Activated naive CD8-positive, alpha-beta T cell treated with anti-CD3 and anti-CD28 coated beads, Interleukin-2, amount 10 ng/mL, durations not matched to agents 7 days and 5 days (primary cell): ENCODE measurements at regions of chr16 and their contacts with region 1.

Region 1: DNA sequence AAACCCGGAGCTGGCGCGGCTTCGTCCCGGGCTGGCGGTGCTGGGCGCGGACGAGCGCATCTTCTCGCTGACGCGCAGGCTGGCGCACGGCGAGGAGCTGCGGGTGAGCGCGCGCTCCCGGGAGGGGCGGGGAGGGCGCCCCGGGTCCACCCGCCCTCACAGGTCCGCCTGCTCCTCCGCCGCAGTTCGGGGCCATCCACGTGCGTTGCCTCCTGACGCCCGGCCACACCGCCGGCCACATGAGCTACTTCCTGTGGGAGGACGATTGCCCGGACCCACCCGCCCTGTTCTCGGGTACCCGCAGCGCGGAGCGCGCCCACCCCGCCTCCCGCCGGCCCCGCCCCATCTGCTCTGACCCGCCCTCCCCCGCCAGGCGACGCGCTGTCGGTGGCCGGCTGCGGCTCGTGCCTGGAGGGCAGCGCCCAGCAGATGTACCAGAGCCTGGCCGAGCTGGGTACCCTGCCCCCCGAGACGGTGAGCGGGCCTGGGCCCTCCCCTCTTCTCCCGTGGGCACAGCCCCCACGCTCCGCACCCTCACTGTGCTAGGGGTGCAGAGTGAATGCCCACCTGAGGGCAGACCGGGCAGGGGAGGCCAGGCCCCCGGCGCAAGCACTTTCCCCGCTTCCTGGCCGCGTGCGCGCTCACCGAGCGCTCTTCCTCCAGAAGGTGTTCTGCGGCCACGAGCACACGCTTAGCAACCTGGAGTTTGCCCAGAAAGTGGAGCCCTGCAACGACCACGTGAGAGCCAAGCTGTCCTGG is 1.4 kb downstream of the HAGHL start:
- DNase-seq: peak; percentile 77
- ATAC-seq: peak; percentile 55
- H3K4me3 Mint-ChIP-seq: peak overlapping the region; percentile 40
- H3K27ac Mint-ChIP-seq: no peak overlapping the region
- H3K4me1 Mint-ChIP-seq: no peaks in the 10 kb centered on the region
- H3K27me3 Mint-ChIP-seq: no peaks in the 10 kb centered on the region

Region 2: DNA sequence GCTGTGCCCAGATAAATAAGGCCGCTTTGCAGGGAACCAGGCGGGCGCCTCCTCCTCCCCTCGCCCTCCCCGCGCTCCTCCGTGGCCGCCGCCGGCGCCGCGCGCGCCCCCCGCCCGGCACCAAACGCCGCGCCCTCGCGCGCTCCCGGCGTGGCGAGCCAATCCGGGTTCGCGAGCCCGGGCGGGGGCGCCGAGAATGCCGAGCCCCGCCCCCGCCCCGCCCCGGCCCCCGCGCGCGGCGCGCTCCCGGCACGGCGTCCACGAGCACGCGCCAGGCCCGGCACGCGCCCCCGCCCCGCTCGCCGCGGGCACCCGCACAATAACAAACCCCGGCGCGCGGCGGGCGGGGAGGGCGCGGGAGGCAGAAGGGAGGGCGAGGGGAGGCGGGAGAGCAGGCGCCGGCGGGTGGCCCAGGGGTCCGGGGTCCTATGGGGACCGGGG is 22.5 kb before region 1 on chr16 and contains the start of gene FBXL16:
- POLR2A ChIA-PET with region 1: no interaction called
- DNase-seq: no peak
- ATAC-seq: no peak
- H3K4me3 Mint-ChIP-seq: no peak within 1 kb of the TSS
- H3K27ac Mint-ChIP-seq: no peak within 1 kb of the TSS
- H3K4me1 Mint-ChIP-seq: no peaks in the 10 kb centered on the region
- H3K27me3 Mint-ChIP-seq: peaks cover 45% of the 10 kb centered on the region
- total RNA-seq, gene FBXL16: 15.9 to 21.8 TPM

Region 3: GRCh38 chr16:740764-741505 is 12.6 kb after region 1 on chr16 and contains the start of gene CIAO3:
- POLR2A ChIA-PET with region 1: interaction called, 13 read pairs
- DNase-seq: peak; percentile 99
- ATAC-seq: peak; percentile 92
- H3K4me3 Mint-ChIP-seq: peak within 1 kb of the TSS; percentile 81
- H3K27ac Mint-ChIP-seq: peak within 1 kb of the TSS; percentile 75
- H3K4me1 Mint-ChIP-seq: peaks cover 6% of the 10 kb centered on the region
- H3K27me3 Mint-ChIP-seq: no peaks in the 10 kb centered on the region
- total RNA-seq, gene CIAO3: 39.6 to 42.4 TPM